ENCODE measurements at regions of chr9 and their contacts with region 1.

Region 1: GRCh38 chr9:111483862-111484571 is at the start of gene ECPAS:
- DNase-seq: peak; percentile 59
- H3K4me3 Mint-ChIP-seq: peak within 1 kb of the TSS; percentile 84
- H3K27ac Mint-ChIP-seq: peak within 1 kb of the TSS; percentile 82
- H3K4me1 Mint-ChIP-seq: peaks cover 23% of the 10 kb centered on the region
- H3K27me3 Mint-ChIP-seq: peaks cover 9% of the 10 kb centered on the region
- total RNA-seq, gene ECPAS: 96.8 and 107 TPM in 2 replicates

Region 2: GRCh38 chr9:111411266-111411665 is 72.8 kb before region 1 on chr9:
- intact Hi-C with region 1: no loop called
- DNase-seq: no peak
- H3K4me3 Mint-ChIP-seq: no peak overlapping the region
- H3K27ac Mint-ChIP-seq: no peak overlapping the region
- H3K4me1 Mint-ChIP-seq: no peaks in the 10 kb centered on the region
- H3K27me3 Mint-ChIP-seq: no peaks in the 10 kb centered on the region

Region 3: DNA sequence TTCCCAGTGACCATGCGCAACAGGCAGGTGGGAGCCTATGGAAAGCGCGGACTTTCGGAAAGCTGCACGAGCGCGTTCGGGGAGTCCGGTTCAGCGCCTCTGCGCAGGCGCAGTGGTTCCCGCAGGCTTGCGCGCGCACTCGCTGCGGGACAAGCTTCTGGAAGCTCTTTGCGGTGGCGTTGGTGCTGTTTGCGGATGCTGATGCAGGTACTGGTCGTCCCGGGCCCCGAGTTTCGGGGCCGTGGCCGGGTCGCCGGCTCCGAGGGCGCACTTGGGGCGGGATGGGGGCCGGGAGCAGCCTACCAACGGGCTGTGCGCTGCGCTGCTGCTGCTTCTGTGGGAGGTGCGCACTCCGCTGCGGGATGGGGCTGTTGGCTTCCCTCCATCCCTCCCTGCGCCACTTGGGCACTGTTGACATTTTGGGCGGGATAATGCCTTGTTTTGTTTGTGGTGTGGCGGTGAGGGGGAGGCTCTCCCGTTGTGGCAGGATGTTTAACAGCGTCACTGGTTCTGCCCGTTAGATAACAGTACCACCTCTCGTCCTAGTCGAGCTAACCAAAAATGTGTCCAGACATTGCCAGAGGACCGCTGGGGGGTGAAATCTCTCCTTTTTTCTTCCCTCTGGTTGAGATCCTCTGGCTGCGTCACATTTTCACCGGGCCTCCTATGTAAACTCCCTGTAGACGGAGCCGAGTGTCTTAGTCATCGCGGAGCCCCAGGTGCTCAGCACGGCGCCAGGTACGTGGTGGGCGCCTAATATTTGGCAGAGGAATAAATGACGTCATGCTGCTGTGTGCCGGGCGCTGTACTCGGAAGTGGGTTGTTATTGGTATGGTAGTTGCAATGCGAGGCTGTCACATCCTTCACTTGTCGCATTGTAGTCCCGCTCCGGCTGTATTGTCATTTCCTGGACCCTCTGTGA is 41.3 kb after region 1 on chr9 and contains the start of gene ZNF483:
- intact Hi-C with region 1: loop called (anchors 2 kb)
- DNase-seq: peak; percentile 59
- H3K4me3 Mint-ChIP-seq: peak within 1 kb of the TSS; percentile 90
- H3K27ac Mint-ChIP-seq: peak within 1 kb of the TSS; percentile 80
- H3K4me1 Mint-ChIP-seq: peaks cover 22% of the 10 kb centered on the region
- H3K27me3 Mint-ChIP-seq: no peaks in the 10 kb centered on the region
- total RNA-seq, gene ZNF483: 3.1 and 3.2 TPM in 2 replicates

Region 4: DNA sequence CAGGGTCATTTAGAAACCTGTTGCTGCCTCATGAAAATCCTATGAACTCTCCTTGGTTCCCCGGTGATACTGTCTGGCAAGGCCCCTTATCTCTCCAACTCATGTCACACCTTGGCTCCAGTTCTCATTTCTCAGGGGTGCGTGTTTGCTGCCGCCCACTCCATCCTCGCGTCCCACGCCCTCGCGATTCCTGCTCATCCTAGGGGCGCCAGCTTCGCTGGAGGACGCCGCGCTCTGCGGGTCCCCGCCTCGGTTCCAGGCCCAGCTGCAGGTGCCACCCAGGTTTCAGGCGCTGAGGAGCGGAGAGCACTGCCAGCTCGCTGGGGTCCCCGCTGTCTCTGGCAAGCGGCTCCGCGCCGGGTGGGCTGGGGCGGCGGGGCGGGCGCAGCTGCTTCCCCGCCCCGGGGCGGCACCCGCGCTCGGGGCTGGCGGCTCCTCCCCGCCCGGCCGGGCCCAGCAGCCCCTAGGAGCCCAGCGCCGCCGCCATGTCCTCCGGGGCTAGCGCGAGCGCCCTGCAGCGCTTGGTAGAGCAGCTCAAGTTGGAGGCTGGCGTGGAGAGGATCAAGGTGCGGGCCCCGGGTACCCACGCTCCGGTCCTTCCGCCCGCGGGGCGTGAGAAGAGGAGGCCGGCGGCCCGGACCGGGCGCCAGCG is 177.3 kb after region 1 on chr9 and contains the start of gene GNG10:
- intact Hi-C with region 1: loop called (anchors 2 kb)
- DNase-seq: peak; percentile 62
- H3K4me3 Mint-ChIP-seq: peak within 1 kb of the TSS; percentile 87
- H3K27ac Mint-ChIP-seq: peak within 1 kb of the TSS; percentile 83
- H3K4me1 Mint-ChIP-seq: peaks cover 19% of the 10 kb centered on the region
- H3K27me3 Mint-ChIP-seq: no peaks in the 10 kb centered on the region
- total RNA-seq, gene GNG10: 30.7 and 30.9 TPM in 2 replicates

Region 5: DNA sequence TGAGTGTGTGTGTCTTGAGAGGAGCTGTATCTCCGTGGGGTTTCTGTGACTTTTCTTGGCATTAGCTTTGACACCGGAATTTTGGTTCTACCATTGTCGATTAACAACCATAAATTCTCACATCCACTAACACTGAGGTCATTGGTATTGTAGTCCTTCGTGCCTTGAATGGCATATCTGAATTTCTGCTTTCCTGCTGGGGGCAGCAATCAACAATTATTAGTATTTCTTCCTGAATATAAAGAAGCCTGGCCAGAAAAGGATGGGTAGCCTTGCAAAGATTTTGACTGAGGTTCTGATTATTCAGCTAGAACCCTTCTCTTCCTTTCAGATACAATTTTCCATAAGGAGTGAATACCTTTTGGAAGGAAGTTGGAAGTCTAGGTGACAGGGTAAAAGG is 344.2 kb after region 1 on chr9:
- intact Hi-C with region 1: no loop called
- DNase-seq: no peak
- H3K4me3 Mint-ChIP-seq: no peak overlapping the region
- H3K27ac Mint-ChIP-seq: no peak overlapping the region
- H3K4me1 Mint-ChIP-seq: no peaks in the 10 kb centered on the region
- H3K27me3 Mint-ChIP-seq: peaks cover 5% of the 10 kb centered on the region

Measured in activated T-helper 2 cell treated with anti-CD3 and anti-CD28 coated beads, Interferon-gamma antibody, Interleukin-2, Interleukin-4, amounts not matched to agents 10 μg/mL and 5 μg/mL and 100 μg/mL, durations not matched to agents 14 hours and 24 hours and 36 hours (primary cell).